Activated B cell treated with CpG ODN at 0.5 μM for 24 hours (primary cell): ENCODE measurements at regions of chr9 and their contacts with region 1.

Region 1: GRCh38 chr9:15510789-15511575 is at the start of gene PSIP1:
- DNase-seq: peak; percentile 85
- ATAC-seq: peak; percentile 78
- H3K4me3 Mint-ChIP-seq: peak within 1 kb of the TSS; percentile 97
- H3K27ac Mint-ChIP-seq: peak within 1 kb of the TSS; percentile 100
- H3K4me1 Mint-ChIP-seq: peaks cover 56% of the 10 kb centered on the region
- H3K27me3 Mint-ChIP-seq: no peaks in the 10 kb centered on the region
- CTCF ChIP-seq: no peak
- total RNA-seq, gene PSIP1: 56.8 and 57.2 TPM in 2 replicates

Region 2: DNA sequence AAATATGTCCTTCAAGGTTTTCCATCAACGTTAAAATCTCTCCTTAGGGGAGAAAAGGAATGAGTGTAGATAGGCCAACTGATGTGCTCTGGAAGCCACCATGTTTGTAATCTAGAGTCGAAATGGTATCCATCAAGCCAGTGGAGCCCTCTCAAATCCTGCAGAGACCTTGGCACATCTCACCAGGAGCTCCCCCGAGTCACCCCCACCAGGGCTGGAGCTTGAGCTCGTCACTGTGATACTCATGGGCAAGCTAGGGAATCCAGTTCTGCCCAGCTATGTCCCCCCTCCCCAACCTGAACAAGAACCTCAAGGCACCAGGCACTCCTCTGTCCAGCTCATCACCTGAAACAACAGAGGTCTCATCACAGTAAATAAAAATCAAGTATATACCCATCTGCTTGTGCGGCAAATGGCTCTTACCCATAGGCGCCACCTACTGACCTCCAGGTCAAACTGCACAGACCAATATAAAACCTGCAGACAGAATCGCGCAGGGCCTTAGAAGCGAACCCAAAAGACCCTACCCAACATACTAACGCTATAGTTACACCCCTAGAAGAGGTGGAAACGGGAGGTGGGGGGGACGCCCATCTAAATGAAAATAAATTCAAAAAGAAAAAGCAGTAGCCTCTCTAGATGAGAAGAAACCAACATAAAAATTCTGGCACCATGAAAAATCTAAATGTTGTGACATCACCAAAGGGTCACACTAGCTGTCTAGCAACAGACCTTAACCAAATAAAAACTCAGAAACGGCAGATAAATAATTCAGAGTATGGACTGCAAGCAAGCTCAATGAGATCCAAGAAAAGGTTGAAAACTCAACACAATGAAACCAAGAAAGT is 279.0 kb before region 1 on chr9:
- CTCF ChIA-PET with region 1: no interaction called
- POLR2A ChIA-PET with region 1: no interaction called
- intact Hi-C with region 1: loop called (anchors 5 kb)
- DNase-seq: no peak
- ATAC-seq: peak; percentile 56
- H3K4me3 Mint-ChIP-seq: no peak overlapping the region
- H3K27ac Mint-ChIP-seq: no peak overlapping the region
- H3K4me1 Mint-ChIP-seq: peaks cover 19% of the 10 kb centered on the region
- H3K27me3 Mint-ChIP-seq: no peaks in the 10 kb centered on the region
- CTCF ChIP-seq: no peak

Region 3: DNA sequence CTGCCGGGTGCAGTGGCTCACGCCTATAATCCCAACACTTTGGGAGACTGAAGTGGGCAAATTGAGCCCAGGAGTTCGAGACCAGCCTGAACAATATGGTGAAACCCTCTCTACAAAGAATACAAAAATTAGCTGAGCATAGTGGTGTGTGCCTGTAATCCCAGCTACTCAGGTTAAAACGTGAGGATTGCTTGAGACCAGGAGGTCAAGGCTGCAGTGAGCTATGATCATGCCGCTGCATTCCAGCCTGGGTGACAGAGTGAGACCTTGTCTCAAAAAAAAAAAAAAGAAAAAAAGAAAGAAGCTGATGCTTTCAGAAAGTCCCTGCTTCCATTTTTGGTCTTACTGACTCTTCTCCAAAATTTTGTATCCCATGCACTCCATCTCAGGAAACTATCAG is 57.0 kb before region 1 on chr9:
- CTCF ChIA-PET with region 1: no interaction called
- POLR2A ChIA-PET with region 1: no interaction called
- intact Hi-C with region 1: no loop called
- DNase-seq: no peak
- ATAC-seq: no peak
- H3K4me3 Mint-ChIP-seq: no peak overlapping the region
- H3K27ac Mint-ChIP-seq: no peak overlapping the region
- H3K4me1 Mint-ChIP-seq: no peaks in the 10 kb centered on the region
- H3K27me3 Mint-ChIP-seq: no peaks in the 10 kb centered on the region
- CTCF ChIP-seq: no peak

Region 4: GRCh38 chr9:15485836-15486666 is 24.9 kb before region 1 on chr9:
- CTCF ChIA-PET with region 1: no interaction called
- POLR2A ChIA-PET with region 1: interaction called, 7 read pairs
- intact Hi-C with region 1: loop called (anchors 1 kb)
- DNase-seq: no peak
- ATAC-seq: no peak
- H3K4me3 Mint-ChIP-seq: no peak overlapping the region
- H3K27ac Mint-ChIP-seq: no peak overlapping the region
- H3K4me1 Mint-ChIP-seq: peaks cover 18% of the 10 kb centered on the region
- H3K27me3 Mint-ChIP-seq: no peaks in the 10 kb centered on the region
- CTCF ChIP-seq: no peak

Region 5: GRCh38 chr9:15552636-15553527 is 41.9 kb after region 1 on chr9 and contains the start of gene CCDC171:
- CTCF ChIA-PET with region 1: interaction called, 7 read pairs
- POLR2A ChIA-PET with region 1: interaction called, 36 read pairs
- intact Hi-C with region 1: loop called (anchors 1 kb)
- DNase-seq: peak; percentile 76
- ATAC-seq: peak; percentile 85
- H3K4me3 Mint-ChIP-seq: peak within 1 kb of the TSS; percentile 96
- H3K27ac Mint-ChIP-seq: peak within 1 kb of the TSS; percentile 82
- H3K4me1 Mint-ChIP-seq: peaks cover 19% of the 10 kb centered on the region
- H3K27me3 Mint-ChIP-seq: no peaks in the 10 kb centered on the region
- CTCF ChIP-seq: no peak
- total RNA-seq, gene CCDC171: 1.9 and 3.6 TPM in 2 replicates